ENCODE measurements at regions of chr12 and their contacts with region 1.

Region 1: GRCh38 chr12:49130151-49131050 is 794 bp downstream of the TUBA1B start:
- DNase-seq: peak; percentile 96
- H3K4me3 ChIP-seq: peak overlapping the region; percentile 79 to 94 (median 87)
- H3K27ac ChIP-seq: peak overlapping the region; percentile 98 to 100 (median 100)
- H3K4me1 ChIP-seq: peaks cover 11 to 33% (median 19%) of the 10 kb centered on the region in 4 donors
- H3K27me3 ChIP-seq: no peaks in the 10 kb centered on the region
- CTCF ChIP-seq: peak; percentile 81 to 96 (median 93)
- EP300 ChIP-seq: no peak
- POLR2A ChIP-seq: peak; percentile 87

Region 2: DNA sequence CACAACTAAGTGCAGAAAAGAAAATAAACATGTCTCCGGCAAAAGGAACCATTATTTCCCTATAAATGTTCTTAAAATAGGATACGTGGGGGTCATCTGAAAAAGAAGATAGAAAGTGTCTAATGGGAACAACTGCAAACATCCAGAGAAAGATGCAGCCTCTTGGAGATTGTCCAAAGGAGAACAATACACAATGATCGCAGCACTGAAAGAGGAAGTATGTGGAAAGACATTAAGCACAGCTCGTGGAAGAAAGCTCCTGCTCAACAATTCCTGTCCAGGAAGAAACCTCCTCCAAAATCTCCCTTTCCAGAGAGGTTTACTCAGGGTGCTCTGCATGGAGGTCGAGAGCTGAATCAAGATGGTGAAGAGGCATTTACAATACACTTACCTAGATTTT is 558.1 kb before region 1 on chr12:
- in situ Hi-C with region 1: no loop called
- intact Hi-C with region 1: no loop called
- DNase-seq: no peak
- H3K4me3 ChIP-seq: no peak overlapping the region
- H3K27ac ChIP-seq: no peak overlapping the region
- H3K4me1 ChIP-seq: no peaks in the 10 kb centered on the region
- H3K27me3 ChIP-seq: no peaks in the 10 kb centered on the region
- CTCF ChIP-seq: no peak
- EP300 ChIP-seq: no peak
- POLR2A ChIP-seq: no peak

Region 3: DNA sequence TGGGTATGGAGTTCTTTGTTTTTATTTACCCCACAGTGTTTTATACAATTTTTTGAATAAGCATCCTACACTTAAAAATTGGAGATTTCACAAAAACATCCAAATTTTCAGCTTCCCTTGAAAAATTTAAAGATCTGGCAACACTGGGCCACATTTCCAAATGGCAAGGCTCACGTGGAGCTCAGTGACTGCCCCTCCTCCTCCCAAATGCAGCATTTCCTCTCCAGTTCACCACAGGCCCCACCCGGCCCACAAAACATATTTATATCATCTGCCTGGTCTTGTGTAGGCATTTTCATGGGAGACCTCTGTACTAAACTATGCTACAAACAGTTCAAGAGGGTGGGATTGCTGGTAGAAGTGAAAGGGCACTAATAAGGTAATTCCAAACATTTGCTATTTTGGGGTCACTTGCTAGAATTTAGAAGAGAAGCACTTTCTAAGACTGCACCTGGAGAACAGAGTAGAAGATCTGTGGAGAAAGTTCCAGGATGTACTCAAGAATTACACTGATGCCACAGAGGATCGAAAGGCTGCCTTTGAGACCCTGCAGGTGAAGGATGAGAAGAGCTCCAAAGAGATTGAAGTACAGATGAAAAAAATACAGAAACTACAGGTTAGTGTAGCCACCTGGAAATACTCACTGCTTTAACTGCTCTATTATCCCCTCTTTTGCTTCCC is 212.4 kb before region 1 on chr12:
- in situ Hi-C with region 1: no loop called
- intact Hi-C with region 1: no loop called
- DNase-seq: peak; percentile 17
- H3K4me3 ChIP-seq: no peak overlapping the region
- H3K27ac ChIP-seq: no peak overlapping the region
- H3K4me1 ChIP-seq: no peaks in the 10 kb centered on the region
- H3K27me3 ChIP-seq: no peaks in the 10 kb centered on the region
- CTCF ChIP-seq: no peak
- EP300 ChIP-seq: no peak
- POLR2A ChIP-seq: no peak

Region 4: DNA sequence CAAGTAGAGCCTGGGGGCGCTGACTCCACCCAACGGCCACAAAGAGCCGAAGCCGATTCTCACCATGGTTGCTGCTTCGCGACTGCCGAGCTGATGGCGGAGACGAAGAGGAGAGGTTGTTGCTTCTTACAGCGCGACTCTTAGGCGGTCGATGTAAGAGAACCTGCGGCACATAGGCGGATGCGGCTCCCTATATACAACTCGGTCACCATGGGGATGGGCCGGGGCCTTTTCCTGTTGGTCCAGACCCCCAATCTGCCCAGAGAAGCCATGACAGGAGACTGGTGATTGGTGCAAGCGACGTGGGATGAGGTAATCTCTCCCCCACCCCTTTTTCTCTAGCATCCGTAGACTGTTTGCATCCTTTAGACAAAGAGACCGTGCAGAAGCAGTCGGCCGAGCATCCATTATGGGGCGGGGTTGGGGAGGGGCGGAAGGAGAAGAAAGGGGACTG is 58.5 kb after region 1 on chr12 and contains the start of gene TUBA1A:
- in situ Hi-C with region 1: no loop called
- intact Hi-C with region 1: loop called (anchors 5 kb)
- DNase-seq: peak; percentile 89
- H3K4me3 ChIP-seq: peak within 1 kb of the TSS; percentile 73 to 86 (median 81)
- H3K27ac ChIP-seq: peak within 1 kb of the TSS; percentile 97 to 98 (median 98)
- H3K4me1 ChIP-seq: peaks cover 3 to 28% (median 8%) of the 10 kb centered on the region in 4 donors
- H3K27me3 ChIP-seq: peaks cover 5% of the 10 kb centered on the region
- CTCF ChIP-seq: no peak
- EP300 ChIP-seq: no peak
- POLR2A ChIP-seq: peak; percentile 94
- total RNA-seq, gene TUBA1A: 77.1 to 201 (median 92.6) TPM